CD4-positive, alpha-beta T cell (primary cell): ENCODE measurements at regions of chr13 and their contacts with region 1.

Region 1: GRCh38 chr13:40789275-40790133 is at the start of gene SLC25A15:
- DNase-seq: peak; percentile 30 to 85 (median 68)
- ATAC-seq: peak; percentile 86
- H3K4me3 ChIP-seq: peak within 1 kb of the TSS; percentile 69
- H3K4me3 Mint-ChIP-seq: peak within 1 kb of the TSS; percentile 92
- H3K27ac ChIP-seq: peak within 1 kb of the TSS; percentile 36 to 56
- H3K27ac Mint-ChIP-seq: peak within 1 kb of the TSS; percentile 81
- H3K4me1 ChIP-seq: peaks cover 18% of the 10 kb centered on the region
- H3K4me1 Mint-ChIP-seq: peaks cover 27% of the 10 kb centered on the region
- H3K27me3 ChIP-seq: no peaks in the 10 kb centered on the region
- H3K27me3 Mint-ChIP-seq: no peaks in the 10 kb centered on the region
- CTCF ChIP-seq: no peak
- total RNA-seq, gene SLC25A15: 2.1 to 2.2 TPM

Region 2: DNA sequence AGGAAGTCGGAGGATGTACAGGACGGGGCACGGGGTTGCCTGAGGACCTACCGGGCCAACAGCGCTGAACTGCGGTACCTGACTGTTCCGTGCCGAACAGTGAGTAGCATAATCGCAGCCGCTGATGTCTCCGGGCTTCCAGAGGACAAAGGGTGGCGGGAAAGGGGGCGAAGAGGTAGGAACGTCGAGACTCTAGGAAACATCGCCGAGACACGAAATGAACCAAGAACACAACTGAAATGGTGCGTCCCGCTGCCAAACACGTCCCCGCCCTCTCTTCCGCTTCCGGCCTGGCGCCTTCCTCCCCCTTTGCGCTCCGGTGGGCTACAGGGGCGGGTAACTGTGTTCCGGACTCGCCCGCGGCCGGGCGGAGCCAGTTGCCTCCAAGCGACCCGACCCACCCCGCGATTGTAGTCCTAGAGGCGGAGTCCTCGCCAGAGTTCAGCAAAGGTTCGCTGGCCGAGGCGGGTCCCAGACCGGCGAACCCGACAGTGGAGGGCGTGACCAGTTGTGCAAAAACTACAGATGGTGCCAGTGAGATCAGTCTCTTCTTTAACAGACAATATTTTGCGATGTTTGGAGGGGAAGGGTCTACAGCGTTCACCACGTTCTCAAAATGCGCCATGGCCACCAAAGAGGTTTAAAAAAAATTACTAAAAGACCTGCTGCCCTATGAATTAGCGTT is 18.4 kb before region 1 on chr13 and contains the start of gene MRPS31:
- CTCF ChIA-PET with region 1: interaction called, 5 read pairs
- POLR2A ChIA-PET with region 1: interaction called, 16 read pairs
- intact Hi-C with region 1: loop called in 1 of 2 experiments (anchors 2 kb)
- DNase-seq: peak; percentile 87 to 96 (median 94)
- ATAC-seq: peak; percentile 92
- H3K4me3 ChIP-seq: peak within 1 kb of the TSS; percentile 90
- H3K4me3 Mint-ChIP-seq: peak within 1 kb of the TSS; percentile 98
- H3K27ac ChIP-seq: peak within 1 kb of the TSS; percentile 75 to 81
- H3K27ac Mint-ChIP-seq: peak within 1 kb of the TSS; percentile 95
- H3K4me1 ChIP-seq: peaks cover 26% of the 10 kb centered on the region
- H3K4me1 Mint-ChIP-seq: peaks cover 29% of the 10 kb centered on the region
- H3K27me3 ChIP-seq: no peaks in the 10 kb centered on the region
- H3K27me3 Mint-ChIP-seq: no peaks in the 10 kb centered on the region
- CTCF ChIP-seq: peak; percentile 16
- total RNA-seq, gene MRPS31: 8.3 to 9.5 TPM

Region 3: GRCh38 chr13:40777166-40777808 is 12.2 kb before region 1 on chr13:
- CTCF ChIA-PET with region 1: interaction called, 11 read pairs
- POLR2A ChIA-PET with region 1: interaction called, 16 read pairs
- intact Hi-C with region 1: no loop called
- DNase-seq: peak in 7 of 14 experiments; percentile 15 to 76 (median 45)
- ATAC-seq: peak; percentile 50
- H3K4me3 ChIP-seq: peak overlapping the region; percentile 24
- H3K4me3 Mint-ChIP-seq: peak overlapping the region; percentile 83
- H3K27ac ChIP-seq: peak overlapping the region; percentile 71 to 73
- H3K27ac Mint-ChIP-seq: peak overlapping the region; percentile 91
- H3K4me1 ChIP-seq: peaks cover 30% of the 10 kb centered on the region
- H3K4me1 Mint-ChIP-seq: peaks cover 33% of the 10 kb centered on the region
- H3K27me3 ChIP-seq: no peaks in the 10 kb centered on the region
- H3K27me3 Mint-ChIP-seq: no peaks in the 10 kb centered on the region
- CTCF ChIP-seq: peak; percentile 84

Region 4: GRCh38 chr13:40916207-40916998 is 126.9 kb after region 1 on chr13:
- CTCF ChIA-PET with region 1: no interaction called
- POLR2A ChIA-PET with region 1: interaction called, 5 read pairs
- intact Hi-C with region 1: loop called in 1 of 2 experiments (anchors 5 kb)
- DNase-seq: no peak
- ATAC-seq: no peak
- H3K4me3 ChIP-seq: no peak overlapping the region
- H3K4me3 Mint-ChIP-seq: no peak overlapping the region
- H3K27ac ChIP-seq: no peak overlapping the region
- H3K27ac Mint-ChIP-seq: no peak overlapping the region
- H3K4me1 ChIP-seq: peaks cover 11% of the 10 kb centered on the region
- H3K4me1 Mint-ChIP-seq: peaks cover 42% of the 10 kb centered on the region
- H3K27me3 ChIP-seq: no peaks in the 10 kb centered on the region
- H3K27me3 Mint-ChIP-seq: no peaks in the 10 kb centered on the region
- CTCF ChIP-seq: no peak

Region 5: DNA sequence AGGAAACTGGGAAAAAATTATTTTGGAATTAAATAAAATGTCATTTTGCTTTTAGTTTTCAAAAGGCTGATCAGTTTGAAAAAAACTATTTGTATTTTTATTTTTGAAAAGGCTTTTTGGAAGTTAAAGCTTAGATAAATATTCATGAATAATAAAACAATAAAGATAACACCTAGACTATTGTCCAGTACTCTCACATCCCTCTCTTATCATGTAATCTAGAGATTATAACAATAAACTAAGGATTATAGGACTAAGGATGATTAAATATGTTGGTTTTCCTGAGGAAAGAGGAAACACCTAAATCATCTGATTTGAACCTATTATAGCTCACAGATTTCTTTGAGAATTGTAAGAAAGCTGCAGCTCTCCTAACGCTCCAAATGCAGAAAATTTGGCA is 1401.0 kb after region 1 on chr13:
- CTCF ChIA-PET with region 1: no interaction called
- POLR2A ChIA-PET with region 1: no interaction called
- intact Hi-C with region 1: no loop called
- DNase-seq: no peak
- ATAC-seq: no peak
- H3K4me3 ChIP-seq: no peak overlapping the region
- H3K4me3 Mint-ChIP-seq: no peak overlapping the region
- H3K27ac ChIP-seq: no peak overlapping the region
- H3K27ac Mint-ChIP-seq: no peak overlapping the region
- H3K4me1 ChIP-seq: no peaks in the 10 kb centered on the region
- H3K4me1 Mint-ChIP-seq: no peaks in the 10 kb centered on the region
- H3K27me3 ChIP-seq: no peaks in the 10 kb centered on the region
- H3K27me3 Mint-ChIP-seq: no peaks in the 10 kb centered on the region
- CTCF ChIP-seq: no peak